ENCODE measurements at regions of chr11 and their contacts with region 1.

Region 1: GRCh38 chr11:130181295-130182272 is 22.0 kb downstream of the ST14 start:
- H3K4me3 ChIP-seq: no peak overlapping the region
- H3K27ac ChIP-seq: peak overlapping the region; percentile 28; the same call in 1 of the 2 replicates
- H3K4me1 ChIP-seq: no peaks in the 10 kb centered on the region
- CTCF ChIP-seq: no peak

Region 2: DNA sequence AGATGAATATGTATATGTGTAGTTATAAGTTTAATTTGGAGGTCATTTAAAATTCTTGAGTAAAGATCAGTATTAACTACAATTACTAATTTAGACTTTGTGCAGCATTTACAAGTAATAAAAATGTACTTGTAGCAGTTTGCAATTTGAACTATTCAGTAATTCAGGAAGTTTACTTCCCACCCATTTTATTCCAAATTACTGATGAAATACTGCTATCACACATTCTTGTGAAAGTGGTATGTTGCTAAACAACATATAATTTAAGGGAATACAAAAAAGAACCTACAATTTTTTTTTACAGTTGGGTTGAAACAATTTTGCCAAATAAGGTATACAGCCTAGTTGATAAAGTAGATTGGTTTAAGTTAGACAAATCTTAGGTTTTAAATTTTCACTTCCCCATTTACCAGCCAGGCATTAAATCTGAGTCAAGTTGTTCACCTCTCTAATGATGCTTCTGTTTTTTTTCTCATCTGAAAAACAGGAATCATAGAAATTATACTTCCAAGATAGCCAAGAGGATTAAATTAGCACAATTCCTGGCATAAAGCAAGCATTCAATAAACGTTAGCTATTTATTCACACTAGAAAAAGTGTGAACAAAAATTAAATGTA is 87.9 kb after region 1 on chr11:
- CTCF ChIA-PET with region 1: interaction called, 10 read pairs
- POLR2A ChIA-PET with region 1: no interaction called
- H3K4me3 ChIP-seq: no peak overlapping the region
- H3K27ac ChIP-seq: no peak overlapping the region
- H3K4me1 ChIP-seq: no peaks in the 10 kb centered on the region
- CTCF ChIP-seq: no peak